Upper lobe of right lung (tissue), 1 donor: ENCODE measurements at regions of chr20 and their contacts with region 1.

Region 1: GRCh38 chr20:44210422-44211176 is at the start of gene OSER1:
- DNase-seq: peak; percentile 98
- ATAC-seq: peak; percentile 96
- H3K4me3 ChIP-seq: peak within 1 kb of the TSS; percentile 77
- H3K27ac ChIP-seq: peak within 1 kb of the TSS; percentile 94
- H3K4me1 ChIP-seq: peaks cover 37% of the 10 kb centered on the region
- H3K27me3 ChIP-seq: no peaks in the 10 kb centered on the region
- CTCF ChIP-seq: no peak
- total RNA-seq, gene OSER1: 29.6 TPM

Region 2: DNA sequence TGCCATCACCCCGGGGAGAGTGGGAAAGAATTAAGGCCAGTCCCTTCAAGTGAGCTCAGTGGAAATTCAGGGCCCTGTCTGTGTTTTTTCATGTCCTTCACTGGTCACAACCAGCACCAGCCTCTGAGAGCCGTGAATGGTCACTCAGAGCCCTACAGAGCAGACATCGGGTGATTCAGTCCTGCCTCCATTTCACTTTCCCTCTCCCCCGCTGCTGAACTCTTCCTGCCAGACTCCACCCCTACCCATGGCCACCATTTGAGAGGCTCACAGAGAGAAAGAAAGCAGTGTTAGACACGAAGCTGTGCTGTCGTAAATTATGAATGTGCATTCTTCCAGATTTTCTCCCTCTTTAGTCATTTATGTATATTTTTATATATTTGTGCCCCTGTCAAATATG is 131.6 kb after region 1 on chr20:
- intact Hi-C with region 1: no loop called
- DNase-seq: peak; percentile 23
- ATAC-seq: no peak
- H3K4me3 ChIP-seq: no peak overlapping the region
- H3K27ac ChIP-seq: no peak overlapping the region
- H3K4me1 ChIP-seq: no peaks in the 10 kb centered on the region
- H3K27me3 ChIP-seq: peaks cover 9% of the 10 kb centered on the region
- CTCF ChIP-seq: no peak

Region 3: GRCh38 chr20:44388466-44389023 is 177.9 kb after region 1 on chr20:
- intact Hi-C with region 1: loop called (anchors 10 kb)
- DNase-seq: peak; percentile 82
- ATAC-seq: peak; percentile 91
- H3K4me3 ChIP-seq: no peak overlapping the region
- H3K27ac ChIP-seq: no peak overlapping the region
- H3K4me1 ChIP-seq: no peaks in the 10 kb centered on the region
- H3K27me3 ChIP-seq: peaks cover 9% of the 10 kb centered on the region
- CTCF ChIP-seq: peak; percentile 73

Region 4: GRCh38 chr20:44485078-44485828 is 274.7 kb after region 1 on chr20:
- intact Hi-C with region 1: no loop called
- DNase-seq: no peak
- ATAC-seq: no peak
- H3K4me3 ChIP-seq: no peak overlapping the region
- H3K27ac ChIP-seq: no peak overlapping the region
- H3K4me1 ChIP-seq: no peaks in the 10 kb centered on the region
- H3K27me3 ChIP-seq: no peaks in the 10 kb centered on the region
- CTCF ChIP-seq: no peak